ENCODE measurements at regions of chr16 and their contacts with region 1.

Region 1: GRCh38 chr16:88005181-88005581 is 53.9 kb downstream of the BANP start:
- DNase-seq: peak; percentile 24
- H3K4me3 Mint-ChIP-seq: no peak overlapping the region
- H3K27ac Mint-ChIP-seq: peak overlapping the region; percentile 36
- H3K4me1 Mint-ChIP-seq: peaks cover 11% of the 10 kb centered on the region
- H3K27me3 Mint-ChIP-seq: no peaks in the 10 kb centered on the region

Region 2: GRCh38 chr16:87806603-87807546 is 198.3 kb before region 1 on chr16:
- CTCF ChIA-PET with region 1: no interaction called
- intact Hi-C with region 1: no loop called
- DNase-seq: peak; percentile 88
- H3K4me3 Mint-ChIP-seq: peak overlapping the region; percentile 89
- H3K27ac Mint-ChIP-seq: peak overlapping the region; percentile 94
- H3K4me1 Mint-ChIP-seq: peaks cover 31% of the 10 kb centered on the region
- H3K27me3 Mint-ChIP-seq: no peaks in the 10 kb centered on the region

Region 3: GRCh38 chr16:87956365-87957231 is 48.6 kb before region 1 on chr16:
- CTCF ChIA-PET with region 1: interaction called, 5 read pairs
- intact Hi-C with region 1: loop called (anchors 1 kb)
- DNase-seq: peak; percentile 91
- H3K4me3 Mint-ChIP-seq: peak overlapping the region; percentile 80
- H3K27ac Mint-ChIP-seq: peak overlapping the region; percentile 99
- H3K4me1 Mint-ChIP-seq: peaks cover 90% of the 10 kb centered on the region
- H3K27me3 Mint-ChIP-seq: no peaks in the 10 kb centered on the region